Gastrocnemius medialis (tissue), 4 donors: ENCODE measurements at regions of chr6 and their contacts with region 1.

Region 1: GRCh38 chr6:36027501-36028087 is at the start of gene MAPK14:
- DNase-seq: peak; percentile 99
- ATAC-seq: peak; percentile 96 to 98
- H3K4me3 ChIP-seq: peak within 1 kb of the TSS; percentile 91 to 99 (median 95)
- H3K27ac ChIP-seq: peak within 1 kb of the TSS; percentile 83 to 93 (median 91)
- H3K4me1 ChIP-seq: peaks cover 8 to 16% of the 10 kb centered on the region in 2 donors
- H3K27me3 ChIP-seq: peaks cover 0 to 10% (median 6%) of the 10 kb centered on the region in 3 donors
- CTCF ChIP-seq: peak; percentile 91 to 97 (median 94)
- POLR2A ChIP-seq: peak; percentile 97 to 98
- total RNA-seq, gene MAPK14: 37.6 to 42.4 (median 40.2) TPM

Region 2: DNA sequence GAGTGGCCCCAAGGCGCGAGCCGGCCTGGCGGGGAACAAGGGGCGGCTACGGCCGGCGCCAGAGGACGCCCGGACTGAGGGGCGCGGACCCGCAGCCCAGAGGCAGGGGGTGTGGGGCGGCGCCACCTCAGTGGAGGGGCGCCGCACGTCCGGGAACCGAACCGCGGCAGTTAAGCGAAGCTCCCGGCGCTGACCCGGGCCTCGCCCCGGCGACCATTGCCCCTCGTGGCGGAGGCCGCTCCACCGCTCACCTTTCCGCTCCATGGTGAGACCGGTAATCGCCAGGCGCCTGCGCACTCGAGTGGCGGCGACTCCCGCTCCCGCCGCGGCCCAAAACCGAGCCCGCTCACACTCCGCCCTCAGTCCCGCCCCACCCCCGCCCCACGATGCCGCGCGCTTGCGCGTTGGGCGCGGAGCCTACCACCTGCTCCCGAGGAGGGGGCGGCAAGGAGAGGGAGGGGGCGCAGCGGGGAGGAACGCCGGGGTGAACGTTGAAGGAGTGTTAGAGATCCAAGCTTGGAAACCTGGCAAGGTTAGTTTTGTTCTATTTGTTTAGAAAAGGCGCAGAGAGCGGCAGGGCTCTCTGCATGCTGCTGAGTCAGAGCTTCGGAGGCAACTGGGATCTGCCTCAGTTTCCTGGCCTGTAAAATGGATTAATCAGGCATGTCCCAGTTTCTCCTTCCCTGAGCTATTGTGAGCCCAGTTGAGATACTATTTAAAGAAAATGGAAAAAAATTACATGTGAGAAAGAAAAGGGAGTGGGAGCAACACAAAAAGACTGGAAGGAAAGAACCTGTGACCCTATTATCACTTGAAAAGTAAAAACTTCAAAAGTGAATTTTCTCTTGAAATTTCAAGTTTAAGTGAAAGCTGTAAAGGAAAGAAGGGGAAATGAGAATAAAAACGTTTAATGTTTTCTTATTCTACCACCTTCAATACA is 106.5 kb before region 1 on chr6 and contains the start of gene SRPK1:
- in situ Hi-C with region 1: no loop called
- intact Hi-C with region 1: loop called (anchors 5 kb)
- DNase-seq: peak; percentile 84 to 88
- ATAC-seq: peak; percentile 83 to 84
- H3K4me3 ChIP-seq: peak within 1 kb of the TSS; percentile 62 to 85 (median 70)
- H3K27ac ChIP-seq: peak within 1 kb of the TSS; percentile 79 to 90 (median 80)
- H3K4me1 ChIP-seq: peaks cover 21 to 22% of the 10 kb centered on the region in 2 donors
- H3K27me3 ChIP-seq: no peaks in the 10 kb centered on the region
- CTCF ChIP-seq: no peak
- POLR2A ChIP-seq: peak; percentile 83 to 88
- total RNA-seq, gene SRPK1: 38.2 to 104 (median 56.7) TPM

Region 3: GRCh38 chr6:36064770-36065396 is 37.3 kb after region 1 on chr6:
- in situ Hi-C with region 1: no loop called
- intact Hi-C with region 1: loop called (anchors 5 kb)
- DNase-seq: no peak
- ATAC-seq: no peak
- H3K4me3 ChIP-seq: no peak overlapping the region
- H3K27ac ChIP-seq: no peak overlapping the region
- H3K4me1 ChIP-seq: peaks cover 54 to 58% of the 10 kb centered on the region in 2 donors
- H3K27me3 ChIP-seq: no peaks in the 10 kb centered on the region
- CTCF ChIP-seq: no peak
- POLR2A ChIP-seq: no peak

Region 4: DNA sequence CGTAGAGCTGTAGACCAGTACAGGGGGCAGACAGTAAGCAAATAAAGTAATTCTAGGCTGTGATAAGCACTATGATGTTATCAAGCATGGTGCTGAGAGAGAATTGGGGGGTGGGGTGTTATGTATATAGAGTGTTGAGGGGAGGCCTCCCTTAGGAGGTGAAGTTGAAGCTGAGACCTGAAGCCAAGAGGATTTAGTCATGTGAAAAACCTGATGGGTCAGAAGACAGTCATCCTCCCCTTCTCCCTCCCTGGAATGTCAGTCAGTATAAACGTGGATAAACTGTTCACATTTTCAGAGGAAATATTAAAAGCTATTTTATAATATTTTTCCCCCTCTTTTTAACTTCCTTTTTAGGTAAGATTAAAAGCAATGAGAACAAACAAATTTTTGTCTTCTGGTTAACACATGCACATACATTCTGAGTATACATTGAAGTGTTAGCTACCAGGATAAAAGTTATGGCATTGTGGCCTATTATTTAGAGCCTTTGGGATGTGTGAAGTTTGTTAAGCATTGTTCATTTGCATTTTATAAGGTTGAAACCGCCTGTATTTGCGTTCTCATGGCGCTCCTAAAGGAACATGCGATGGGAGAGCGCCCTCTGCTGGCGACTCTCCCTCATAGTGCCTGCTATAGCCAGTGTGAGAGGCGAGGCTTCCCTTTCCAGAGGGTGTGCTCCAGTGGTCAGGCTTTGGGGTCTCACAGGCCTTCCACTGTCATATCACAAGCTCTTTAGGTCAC is 67.3 kb after region 1 on chr6:
- in situ Hi-C with region 1: loop called (anchors 5 kb)
- intact Hi-C with region 1: loop called (anchors 1 kb)
- DNase-seq: peak; percentile 47 to 73
- ATAC-seq: peak; percentile 89 to 94
- H3K4me3 ChIP-seq: no peak overlapping the region
- H3K27ac ChIP-seq: peak overlapping the region; percentile 33 to 61 (median 59)
- H3K4me1 ChIP-seq: peaks cover 11 to 13% of the 10 kb centered on the region in 2 donors
- H3K27me3 ChIP-seq: no peaks in the 10 kb centered on the region
- CTCF ChIP-seq: peak; percentile 92 to 97 (median 95)
- POLR2A ChIP-seq: no peak

Region 5: DNA sequence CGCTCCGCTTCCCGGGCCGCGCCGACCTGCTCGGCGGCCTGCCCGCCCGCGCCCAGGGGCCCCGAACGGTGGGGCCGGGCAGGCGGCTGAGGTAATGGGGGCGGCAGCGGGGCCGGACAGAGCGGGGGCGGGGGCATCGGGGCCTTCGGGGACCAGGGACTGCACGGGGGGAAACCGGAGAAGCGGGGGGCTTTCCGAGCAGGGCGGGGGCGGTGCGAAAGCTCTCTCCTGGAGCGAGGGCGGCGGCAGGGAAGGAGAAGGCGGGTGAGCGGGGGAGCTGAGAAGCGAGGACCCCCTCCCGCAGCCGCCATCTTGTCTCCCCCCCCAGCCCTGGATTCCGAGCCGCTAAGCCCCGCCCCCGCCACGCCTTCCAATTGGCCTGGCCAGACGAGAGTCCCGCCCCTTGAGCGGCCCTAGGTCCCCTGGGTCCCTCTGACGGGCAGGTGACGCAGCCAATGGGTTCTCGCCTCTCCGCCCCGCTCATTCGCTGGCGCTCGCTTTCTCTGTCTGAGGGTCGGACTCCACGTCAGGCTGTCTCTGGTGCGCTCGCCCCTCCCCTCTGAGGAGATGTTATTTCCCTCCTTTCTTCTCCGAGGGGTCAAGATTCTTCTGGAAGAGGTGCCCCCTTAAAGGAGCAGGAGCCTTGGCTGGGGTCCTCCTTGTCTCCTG is 169.4 kb after region 1 on chr6:
- in situ Hi-C with region 1: loop called in 2 of 4 experiments (anchors 10 kb)
- intact Hi-C with region 1: loop called (anchors 1 kb)
- DNase-seq: peak; percentile 97 to 98
- ATAC-seq: peak; percentile 85 to 87
- H3K4me3 ChIP-seq: peak overlapping the region; percentile 68 to 81 (median 73)
- H3K27ac ChIP-seq: peak overlapping the region; percentile 89 to 98 (median 95)
- H3K4me1 ChIP-seq: peaks cover 8 to 18% of the 10 kb centered on the region in 2 donors
- H3K27me3 ChIP-seq: no peaks in the 10 kb centered on the region
- CTCF ChIP-seq: no peak
- POLR2A ChIP-seq: peak; percentile 79 to 80